KBM-7 (cell line): ENCODE measurements at regions of chr13 and their contacts with region 1.

Region 1: GRCh38 chr13:41668130-41668757 is 210.9 kb downstream of the RGCC start:
- DNase-seq: peak; percentile 92

Region 2: DNA sequence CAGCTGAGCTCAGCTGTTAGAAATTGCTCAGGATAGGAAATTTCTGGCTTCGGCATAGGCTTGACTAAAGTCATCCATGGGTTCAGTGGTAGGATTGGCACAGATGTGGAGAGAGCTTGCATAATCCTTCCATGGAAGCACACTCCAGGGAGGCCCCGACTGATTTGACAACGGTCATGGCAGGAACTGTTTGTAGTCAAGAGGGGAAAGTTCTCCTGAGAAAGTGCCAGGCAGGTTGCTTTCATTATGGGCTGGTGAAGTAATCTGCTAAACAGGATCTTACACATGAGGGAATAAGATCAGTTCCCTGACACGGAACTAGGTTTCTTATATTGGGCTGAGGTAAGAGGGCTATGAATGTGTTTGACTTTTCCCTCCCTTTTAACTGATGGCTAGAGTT is 90.8 kb before region 1 on chr13:
- in situ Hi-C with region 1: no loop called
- DNase-seq: no peak

Region 3: DNA sequence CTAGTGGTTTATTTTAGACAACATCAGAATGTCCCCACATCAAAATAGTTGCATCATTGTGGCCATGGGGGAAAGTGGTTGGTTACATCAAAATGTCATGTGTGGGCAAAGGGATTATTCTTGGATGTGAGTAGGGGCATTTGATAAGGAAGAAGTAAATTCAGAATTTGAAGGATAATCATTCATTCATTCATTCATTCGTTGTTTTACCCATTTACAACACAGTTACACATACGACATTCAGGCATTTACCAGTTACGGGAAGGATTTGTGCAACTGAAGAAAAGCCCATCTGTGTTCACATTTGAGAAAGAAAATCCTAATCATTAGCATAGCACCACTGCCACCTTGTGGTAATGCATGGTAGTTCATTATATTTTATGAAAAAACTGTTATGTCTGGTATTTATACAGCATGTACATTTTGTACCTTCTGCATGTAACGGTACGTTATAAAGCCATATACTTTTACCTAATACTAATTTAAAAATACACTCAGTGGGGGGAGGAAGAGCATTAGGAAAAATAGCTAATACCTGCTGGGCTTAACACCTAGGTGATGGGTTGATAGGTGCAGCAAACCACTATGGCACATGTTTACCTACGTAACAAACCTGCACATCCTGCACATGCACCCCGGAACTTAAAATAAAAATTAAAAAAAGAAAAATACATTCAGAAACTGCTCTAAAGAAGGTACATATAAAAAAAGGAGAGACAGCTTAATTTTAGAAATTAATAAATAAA is 442.3 kb after region 1 on chr13:
- in situ Hi-C with region 1: loop called (anchors 25 kb)
- DNase-seq: peak; percentile 90